ENCODE measurements at regions of chr1 and their contacts with region 1.

Region 1: GRCh38 chr1:119743781-119744597 is 24.7 kb downstream of the HMGCS2 start:
- DNase-seq: peak; percentile 79
- ATAC-seq: peak; percentile 77
- H3K4me3 ChIP-seq: no peak overlapping the region
- H3K27ac ChIP-seq: no peak overlapping the region
- H3K4me1 ChIP-seq: peaks cover 13% of the 10 kb centered on the region
- H3K27me3 ChIP-seq: no peaks in the 10 kb centered on the region
- CTCF ChIP-seq: peak; percentile 88
- POLR2A ChIP-seq: no peak
- RAD21 ChIP-seq: peak; percentile 85

Region 2: DNA sequence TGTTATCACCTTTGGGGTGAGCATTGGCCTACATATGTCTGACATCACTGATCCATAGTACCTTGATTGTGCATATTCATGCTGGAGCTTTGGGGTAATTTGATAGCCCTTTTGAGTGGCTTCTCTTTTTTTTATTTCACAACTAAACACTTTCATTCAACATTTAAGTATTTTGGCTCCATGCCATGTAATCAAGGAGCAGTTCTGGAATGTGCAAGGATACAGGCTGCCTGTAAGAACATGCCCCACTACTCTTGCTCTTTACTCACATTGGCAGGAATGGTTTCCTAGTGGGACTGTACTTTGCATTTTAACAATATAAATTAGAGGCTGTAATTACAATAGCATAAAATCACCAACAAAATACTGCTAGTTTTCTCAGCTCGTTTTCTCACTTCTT is 1258.2 kb before region 1 on chr1:
- CTCF ChIA-PET with region 1: no interaction called
- POLR2A ChIA-PET with region 1: no interaction called
- dilution Hi-C with region 1: no loop called
- in situ Hi-C with region 1: no loop called
- intact Hi-C with region 1: no loop called
- DNase-seq: no peak
- ATAC-seq: no peak
- H3K4me3 ChIP-seq: no peak overlapping the region
- H3K27ac ChIP-seq: no peak overlapping the region
- H3K4me1 ChIP-seq: no peaks in the 10 kb centered on the region
- H3K27me3 ChIP-seq: no peaks in the 10 kb centered on the region
- CTCF ChIP-seq: no peak
- POLR2A ChIP-seq: no peak
- RAD21 ChIP-seq: no peak

Region 3: GRCh38 chr1:119647734-119648619 is 96.0 kb before region 1 on chr1 and contains the start of gene ZNF697:
- CTCF ChIA-PET with region 1: no interaction called
- POLR2A ChIA-PET with region 1: no interaction called
- dilution Hi-C with region 1: no loop called
- in situ Hi-C with region 1: no loop called
- intact Hi-C with region 1: no loop called
- DNase-seq: peak; percentile 98
- ATAC-seq: peak; percentile 85
- H3K4me3 ChIP-seq: peak within 1 kb of the TSS; percentile 78
- H3K27ac ChIP-seq: peak within 1 kb of the TSS; percentile 91
- H3K4me1 ChIP-seq: peaks cover 11% of the 10 kb centered on the region
- H3K27me3 ChIP-seq: no peaks in the 10 kb centered on the region
- CTCF ChIP-seq: peak; percentile 53
- POLR2A ChIP-seq: peak; percentile 88
- RAD21 ChIP-seq: peak; percentile 41
- total RNA-seq, gene ZNF697: 10.2 and 14.4 TPM in 2 replicates

Region 4: GRCh38 chr1:119779869-119780356 is 35.9 kb after region 1 on chr1:
- CTCF ChIA-PET with region 1: no interaction called
- POLR2A ChIA-PET with region 1: no interaction called
- dilution Hi-C with region 1: no loop called
- in situ Hi-C with region 1: no loop called
- intact Hi-C with region 1: loop called (anchors 2 kb)
- DNase-seq: peak; percentile 64
- ATAC-seq: peak; percentile 85
- H3K4me3 ChIP-seq: peak overlapping the region; percentile 6; the same call in 1 of the 2 replicates
- H3K27ac ChIP-seq: peak overlapping the region; percentile 62; the same call in 1 of the 2 replicates
- H3K4me1 ChIP-seq: peaks cover 9% of the 10 kb centered on the region
- H3K27me3 ChIP-seq: no peaks in the 10 kb centered on the region
- CTCF ChIP-seq: no peak
- POLR2A ChIP-seq: no peak
- RAD21 ChIP-seq: no peak

Region 5: DNA sequence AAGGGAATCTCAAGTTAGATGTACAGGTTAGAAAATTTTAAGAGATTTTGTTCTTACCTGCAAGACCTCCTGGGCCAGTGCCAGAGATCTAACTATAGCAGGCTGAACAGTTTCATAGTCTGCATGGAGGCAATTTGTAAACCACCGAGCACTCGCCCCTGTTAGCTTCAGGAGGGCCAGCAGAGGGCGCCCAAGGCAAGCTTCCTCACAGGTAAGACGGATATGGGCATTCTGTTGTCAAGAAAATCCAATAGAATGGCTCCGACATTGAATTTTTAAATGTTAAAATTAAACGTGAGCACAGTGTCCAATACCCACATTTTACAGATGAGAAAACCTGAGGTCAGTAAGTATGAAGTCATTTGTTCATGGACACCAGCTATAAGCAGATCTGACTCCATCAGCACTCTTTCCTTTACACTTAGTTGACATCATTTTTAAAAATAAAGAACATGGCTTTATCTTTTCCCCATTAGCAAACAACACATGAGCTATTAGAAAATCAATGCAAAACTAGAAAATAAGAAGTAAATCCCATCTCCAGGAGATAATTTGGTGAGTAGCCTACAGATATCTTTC is 65.1 kb after region 1 on chr1:
- CTCF ChIA-PET with region 1: interaction called, 6 read pairs
- POLR2A ChIA-PET with region 1: no interaction called
- dilution Hi-C with region 1: no loop called
- in situ Hi-C with region 1: no loop called
- intact Hi-C with region 1: loop called (anchors 2 kb)
- DNase-seq: peak; percentile 69
- ATAC-seq: peak; percentile 91
- H3K4me3 ChIP-seq: no peak overlapping the region
- H3K27ac ChIP-seq: no peak overlapping the region
- H3K4me1 ChIP-seq: 0 out of 2 replicates have a peak, but pooled peaks cover 3% of the 10 kb centered on the region
- H3K27me3 ChIP-seq: peaks cover 12% of the 10 kb centered on the region
- CTCF ChIP-seq: peak; percentile 83
- POLR2A ChIP-seq: no peak
- RAD21 ChIP-seq: peak; percentile 87

Region 6: DNA sequence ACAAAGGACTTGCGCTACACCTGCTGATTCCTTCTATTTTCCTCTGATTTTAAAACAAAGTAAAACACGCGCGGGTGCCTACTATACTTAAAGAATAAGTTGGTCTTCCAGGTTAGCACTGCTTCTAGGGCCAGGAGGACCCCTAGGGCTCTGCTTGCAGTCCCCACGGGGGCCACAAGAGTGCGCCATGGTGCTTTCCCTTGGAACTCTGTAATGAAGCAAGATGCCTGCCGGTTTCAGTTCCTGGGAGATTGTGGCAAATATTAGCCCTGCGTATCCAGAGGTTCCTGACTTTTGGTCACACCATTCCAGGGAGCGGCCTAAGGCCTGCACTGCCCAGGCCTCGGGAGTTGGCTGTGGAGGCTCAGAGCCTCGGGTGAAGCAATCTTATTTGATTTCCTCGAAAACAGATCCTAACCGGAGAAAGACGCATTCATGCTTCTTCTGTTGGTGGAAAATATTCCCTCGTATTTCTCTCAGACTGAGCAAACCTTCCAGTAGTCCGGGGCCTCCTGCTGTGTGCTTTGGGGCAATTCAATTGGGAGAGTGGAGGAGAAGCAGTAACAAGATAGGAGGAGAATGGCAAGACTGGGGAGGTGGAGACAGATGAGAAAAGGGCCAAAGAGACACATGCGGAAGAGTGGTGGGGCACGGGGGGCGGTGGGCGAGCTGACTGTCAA is 127.1 kb after region 1 on chr1:
- CTCF ChIA-PET with region 1: no interaction called
- POLR2A ChIA-PET with region 1: no interaction called
- dilution Hi-C with region 1: no loop called
- in situ Hi-C with region 1: no loop called
- intact Hi-C with region 1: loop called (anchors 2 kb)
- DNase-seq: peak; percentile 72
- ATAC-seq: peak; percentile 90
- H3K4me3 ChIP-seq: no peak overlapping the region
- H3K27ac ChIP-seq: no peak overlapping the region
- H3K4me1 ChIP-seq: peaks cover 14% of the 10 kb centered on the region; the same call in 1 of the 2 replicates
- H3K27me3 ChIP-seq: no peaks in the 10 kb centered on the region
- CTCF ChIP-seq: peak; percentile 94
- POLR2A ChIP-seq: 0 out of 2 replicates have a peak, but pooled peaks have one; percentile 34
- RAD21 ChIP-seq: peak; percentile 96

Region 7: GRCh38 chr1:119924948-119925898 is 181.2 kb after region 1 on chr1:
- CTCF ChIA-PET with region 1: no interaction called
- POLR2A ChIA-PET with region 1: no interaction called
- dilution Hi-C with region 1: no loop called
- in situ Hi-C with region 1: loop called (anchors 10 kb)
- intact Hi-C with region 1: loop called (anchors 10 kb)
- DNase-seq: no peak
- ATAC-seq: no peak
- H3K4me3 ChIP-seq: no peak overlapping the region
- H3K27ac ChIP-seq: no peak overlapping the region
- H3K4me1 ChIP-seq: no peaks in the 10 kb centered on the region
- H3K27me3 ChIP-seq: no peaks in the 10 kb centered on the region
- CTCF ChIP-seq: no peak
- POLR2A ChIP-seq: no peak
- RAD21 ChIP-seq: no peak

Region 8: GRCh38 chr1:119943216-119943615 is 199.2 kb after region 1 on chr1:
- CTCF ChIA-PET with region 1: no interaction called
- POLR2A ChIA-PET with region 1: no interaction called
- dilution Hi-C with region 1: no loop called
- in situ Hi-C with region 1: no loop called
- intact Hi-C with region 1: loop called (anchors 5 kb)
- DNase-seq: no peak
- ATAC-seq: no peak
- H3K4me3 ChIP-seq: no peak overlapping the region
- H3K27ac ChIP-seq: no peak overlapping the region
- H3K4me1 ChIP-seq: peaks cover 5% of the 10 kb centered on the region
- H3K27me3 ChIP-seq: no peaks in the 10 kb centered on the region
- CTCF ChIP-seq: no peak
- POLR2A ChIP-seq: no peak
- RAD21 ChIP-seq: no peak

Region 9: DNA sequence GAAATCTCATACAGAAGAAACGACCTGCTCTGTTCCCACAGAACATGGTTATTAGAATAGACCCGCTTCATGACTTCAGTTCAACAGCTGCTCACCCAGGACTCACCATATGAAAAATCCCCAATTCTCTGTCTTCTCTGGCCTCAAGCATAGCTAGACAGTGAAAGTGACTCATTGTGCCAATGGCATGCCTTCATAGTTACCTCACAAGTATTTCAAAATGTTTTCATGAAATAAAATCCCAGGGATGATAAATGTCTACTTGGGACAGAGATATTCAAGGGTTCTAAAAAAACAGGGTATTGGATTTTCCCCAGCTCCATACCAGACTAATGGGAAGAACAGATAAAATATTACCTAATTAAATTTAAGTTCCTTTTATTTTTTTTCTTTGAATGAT is 243.1 kb after region 1 on chr1:
- CTCF ChIA-PET with region 1: no interaction called
- POLR2A ChIA-PET with region 1: no interaction called
- dilution Hi-C with region 1: no loop called
- in situ Hi-C with region 1: no loop called
- intact Hi-C with region 1: no loop called
- DNase-seq: peak; percentile 97
- ATAC-seq: peak; percentile 94
- H3K4me3 ChIP-seq: no peak overlapping the region
- H3K27ac ChIP-seq: peak overlapping the region; percentile 20; the same call in 1 of the 2 replicates
- H3K4me1 ChIP-seq: peaks cover 13% of the 10 kb centered on the region
- H3K27me3 ChIP-seq: no peaks in the 10 kb centered on the region
- CTCF ChIP-seq: no peak
- POLR2A ChIP-seq: no peak
- RAD21 ChIP-seq: no peak